PC-3 (cell line): ENCODE measurements at regions of chr3 and their contacts with region 1.

Region 1: DNA sequence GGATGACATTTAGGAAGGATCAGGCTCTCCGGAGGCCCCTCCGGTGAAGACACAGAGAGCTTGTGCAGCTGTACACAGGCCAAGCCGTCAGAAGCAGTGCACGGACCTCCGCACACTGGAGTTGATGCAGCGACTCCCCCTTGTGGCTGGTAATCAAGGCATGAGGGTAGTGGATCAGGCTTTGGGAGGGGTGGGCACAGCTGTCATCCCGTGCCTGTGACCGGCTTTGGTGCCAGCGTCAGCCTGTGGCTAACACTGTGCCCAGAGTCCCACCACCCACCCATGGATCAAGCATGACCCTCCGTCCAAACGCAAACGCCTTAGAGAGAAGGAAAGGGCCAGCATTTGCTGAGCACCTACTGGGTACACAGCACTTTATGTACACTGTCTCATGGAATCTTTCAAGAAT is 8.2 kb upstream of the GRIP2 start:
- DNase-seq: peak; percentile 65
- ATAC-seq: peak; percentile 87
- H3K4me3 ChIP-seq: no peak overlapping the region
- H3K27ac ChIP-seq: no peak overlapping the region
- H3K4me1 ChIP-seq: 0 out of 2 replicates have a peak, but pooled peaks cover 4% of the 10 kb centered on the region
- H3K27me3 ChIP-seq: no peaks in the 10 kb centered on the region
- CTCF ChIP-seq: peak; percentile 83

Region 2: DNA sequence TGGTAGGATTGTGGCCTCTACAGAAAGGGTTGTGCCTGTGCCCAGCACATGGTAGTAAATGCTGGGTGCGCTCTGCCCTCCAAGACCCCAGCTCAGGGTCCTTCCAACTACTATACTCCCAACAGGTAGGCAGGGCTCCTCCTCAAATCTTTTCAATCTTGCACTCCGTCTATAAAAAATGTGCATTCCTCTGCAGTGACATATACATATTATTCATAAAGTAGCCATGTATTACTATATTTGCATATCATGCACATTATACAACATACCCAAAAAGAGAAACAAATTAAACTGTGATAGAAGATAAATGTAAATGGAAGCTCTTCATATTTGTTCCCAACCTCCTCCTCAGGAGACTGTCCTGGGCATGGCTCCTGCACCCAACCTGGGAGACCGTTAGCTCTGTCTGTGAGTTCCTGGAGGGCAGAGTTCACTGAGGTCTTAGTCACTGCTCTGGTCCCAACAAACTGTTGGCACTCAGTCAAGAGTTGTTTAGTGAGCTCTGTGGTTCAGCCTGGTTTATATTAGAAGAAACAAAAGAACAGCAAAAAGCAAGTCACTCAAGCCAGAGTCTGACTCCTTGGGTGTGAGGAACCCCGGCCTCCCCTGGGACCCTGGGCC is 39.5 kb after region 1 on chr3:
- CTCF ChIA-PET with region 1: interaction called, 5 read pairs
- POLR2A ChIA-PET with region 1: no interaction called
- intact Hi-C with region 1: loop called (anchors 5 kb)
- DNase-seq: peak; percentile 88
- ATAC-seq: peak; percentile 77
- H3K4me3 ChIP-seq: no peak overlapping the region
- H3K27ac ChIP-seq: peak overlapping the region; percentile 32
- H3K4me1 ChIP-seq: peaks cover 35% of the 10 kb centered on the region
- H3K27me3 ChIP-seq: no peaks in the 10 kb centered on the region
- CTCF ChIP-seq: no peak

Region 3: GRCh38 chr3:14725013-14725412 is 176.7 kb after region 1 on chr3:
- CTCF ChIA-PET with region 1: no interaction called
- POLR2A ChIA-PET with region 1: no interaction called
- intact Hi-C with region 1: no loop called
- DNase-seq: peak; percentile 69
- ATAC-seq: peak; percentile 77
- H3K4me3 ChIP-seq: no peak overlapping the region
- H3K27ac ChIP-seq: peak overlapping the region; percentile 14; the same call in 1 of the 2 replicates
- H3K4me1 ChIP-seq: peaks cover 10% of the 10 kb centered on the region
- H3K27me3 ChIP-seq: no peaks in the 10 kb centered on the region
- CTCF ChIP-seq: no peak

Region 4: DNA sequence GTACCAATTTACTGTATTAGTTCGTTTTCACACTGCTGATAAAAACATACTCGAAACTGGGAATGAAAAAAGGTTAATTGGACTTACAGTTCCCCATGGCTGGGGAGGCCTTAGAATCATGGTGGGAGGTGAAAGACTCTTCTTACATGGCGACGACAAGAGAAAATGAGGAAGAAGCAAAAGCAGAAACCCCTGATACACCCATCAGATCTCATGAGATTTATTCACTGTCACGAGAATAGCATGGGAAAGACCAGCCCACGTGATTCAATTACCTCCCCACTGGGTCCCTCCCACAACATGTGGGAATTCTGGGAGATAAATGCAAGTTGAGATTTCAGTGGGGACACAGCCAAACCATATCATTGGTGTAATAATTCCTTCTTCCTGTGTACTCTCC is 196.2 kb after region 1 on chr3:
- CTCF ChIA-PET with region 1: no interaction called
- POLR2A ChIA-PET with region 1: no interaction called
- intact Hi-C with region 1: no loop called
- DNase-seq: no peak
- ATAC-seq: no peak
- H3K4me3 ChIP-seq: no peak overlapping the region
- H3K27ac ChIP-seq: no peak overlapping the region
- H3K4me1 ChIP-seq: no peaks in the 10 kb centered on the region
- H3K27me3 ChIP-seq: peaks cover 30% of the 10 kb centered on the region
- CTCF ChIP-seq: no peak